Activated B cell treated with CpG ODN at 0.5 μM for 24 hours (primary cell): ENCODE measurements at regions of chr12 and their contacts with region 1.

Region 1: GRCh38 chr12:124863416-124864325 is at the start of gene SCARB1:
- DNase-seq: peak; percentile 80
- ATAC-seq: peak; percentile 85
- H3K4me3 Mint-ChIP-seq: peak within 1 kb of the TSS; percentile 83
- H3K27ac Mint-ChIP-seq: peak within 1 kb of the TSS; percentile 91
- H3K4me1 Mint-ChIP-seq: peaks cover 40% of the 10 kb centered on the region
- H3K27me3 Mint-ChIP-seq: no peaks in the 10 kb centered on the region
- CTCF ChIP-seq: no peak
- total RNA-seq, gene SCARB1: 39.3 and 40.8 TPM in 2 replicates

Region 2: GRCh38 chr12:124745891-124746570 is 117.6 kb before region 1 on chr12:
- CTCF ChIA-PET with region 1: no interaction called
- POLR2A ChIA-PET with region 1: no interaction called
- intact Hi-C with region 1: no loop called
- DNase-seq: no peak
- ATAC-seq: peak; percentile 43
- H3K4me3 Mint-ChIP-seq: no peak overlapping the region
- H3K27ac Mint-ChIP-seq: no peak overlapping the region
- H3K4me1 Mint-ChIP-seq: peaks cover 20% of the 10 kb centered on the region
- H3K27me3 Mint-ChIP-seq: peaks cover 24% of the 10 kb centered on the region
- CTCF ChIP-seq: no peak

Region 3: DNA sequence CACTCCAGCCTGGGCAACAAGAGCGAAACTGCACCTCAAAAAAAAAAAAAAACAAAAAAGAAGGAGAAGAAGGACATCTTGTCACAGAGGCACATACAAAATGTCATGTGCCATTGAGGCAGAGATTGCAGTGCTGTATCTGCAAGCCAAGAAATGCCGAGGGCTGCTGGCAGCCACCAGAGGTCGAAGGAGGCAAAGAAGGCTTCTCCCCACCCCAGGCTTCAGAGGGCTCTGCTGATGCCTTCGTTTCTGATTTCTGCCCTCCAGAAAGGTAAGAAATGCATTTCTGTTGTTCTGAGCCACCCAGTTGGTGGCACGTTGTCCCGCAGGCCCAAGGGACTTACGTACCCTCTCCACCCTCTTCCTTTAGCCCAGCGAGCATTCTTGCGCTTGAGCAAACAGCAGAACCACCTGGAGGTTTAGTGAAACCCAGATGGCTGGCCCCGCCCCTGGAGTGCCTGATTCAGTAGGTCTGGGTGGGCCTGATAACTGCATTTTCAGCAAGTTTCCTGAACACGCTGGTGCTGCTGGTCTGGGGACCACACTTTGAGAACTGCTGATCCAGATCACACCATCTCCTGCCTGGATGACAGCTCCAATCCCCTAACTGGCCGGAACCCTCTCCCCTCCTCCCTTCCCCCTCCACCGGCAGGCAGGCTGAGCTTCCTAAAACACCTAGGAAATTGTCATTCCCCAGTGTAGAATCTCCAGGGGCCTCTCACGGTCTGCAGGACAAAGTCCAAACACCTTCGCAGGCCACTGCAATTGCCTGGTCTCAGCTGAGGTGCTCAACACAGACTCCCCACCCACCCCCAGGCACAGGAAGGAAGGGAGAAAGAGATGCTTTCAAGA is 21.1 kb after region 1 on chr12:
- CTCF ChIA-PET with region 1: interaction called, 3 read pairs
- POLR2A ChIA-PET with region 1: interaction called, 11 read pairs
- intact Hi-C with region 1: loop called (anchors 2 kb)
- DNase-seq: peak; percentile 60
- ATAC-seq: peak; percentile 95
- H3K4me3 Mint-ChIP-seq: peak overlapping the region; percentile 70
- H3K27ac Mint-ChIP-seq: peak overlapping the region; percentile 87
- H3K4me1 Mint-ChIP-seq: peaks cover 65% of the 10 kb centered on the region
- H3K27me3 Mint-ChIP-seq: no peaks in the 10 kb centered on the region
- CTCF ChIP-seq: no peak

Region 4: GRCh38 chr12:124898200-124898922 is 34.7 kb after region 1 on chr12:
- CTCF ChIA-PET with region 1: no interaction called
- POLR2A ChIA-PET with region 1: interaction called, 20 read pairs
- intact Hi-C with region 1: loop called (anchors 1 kb)
- DNase-seq: peak; percentile 55
- ATAC-seq: peak; percentile 81
- H3K4me3 Mint-ChIP-seq: peak overlapping the region; percentile 29
- H3K27ac Mint-ChIP-seq: no peak overlapping the region
- H3K4me1 Mint-ChIP-seq: peaks cover 45% of the 10 kb centered on the region
- H3K27me3 Mint-ChIP-seq: no peaks in the 10 kb centered on the region
- CTCF ChIP-seq: peak; percentile 33

Region 5: GRCh38 chr12:124917135-124917840 is 53.6 kb after region 1 on chr12:
- CTCF ChIA-PET with region 1: no interaction called
- POLR2A ChIA-PET with region 1: interaction called, 15 read pairs
- intact Hi-C with region 1: no loop called
- DNase-seq: peak; percentile 77
- ATAC-seq: peak; percentile 63
- H3K4me3 Mint-ChIP-seq: peak overlapping the region; percentile 100
- H3K27ac Mint-ChIP-seq: peak overlapping the region; percentile 100
- H3K4me1 Mint-ChIP-seq: peaks cover 91% of the 10 kb centered on the region
- H3K27me3 Mint-ChIP-seq: no peaks in the 10 kb centered on the region
- CTCF ChIP-seq: no peak

Region 6: DNA sequence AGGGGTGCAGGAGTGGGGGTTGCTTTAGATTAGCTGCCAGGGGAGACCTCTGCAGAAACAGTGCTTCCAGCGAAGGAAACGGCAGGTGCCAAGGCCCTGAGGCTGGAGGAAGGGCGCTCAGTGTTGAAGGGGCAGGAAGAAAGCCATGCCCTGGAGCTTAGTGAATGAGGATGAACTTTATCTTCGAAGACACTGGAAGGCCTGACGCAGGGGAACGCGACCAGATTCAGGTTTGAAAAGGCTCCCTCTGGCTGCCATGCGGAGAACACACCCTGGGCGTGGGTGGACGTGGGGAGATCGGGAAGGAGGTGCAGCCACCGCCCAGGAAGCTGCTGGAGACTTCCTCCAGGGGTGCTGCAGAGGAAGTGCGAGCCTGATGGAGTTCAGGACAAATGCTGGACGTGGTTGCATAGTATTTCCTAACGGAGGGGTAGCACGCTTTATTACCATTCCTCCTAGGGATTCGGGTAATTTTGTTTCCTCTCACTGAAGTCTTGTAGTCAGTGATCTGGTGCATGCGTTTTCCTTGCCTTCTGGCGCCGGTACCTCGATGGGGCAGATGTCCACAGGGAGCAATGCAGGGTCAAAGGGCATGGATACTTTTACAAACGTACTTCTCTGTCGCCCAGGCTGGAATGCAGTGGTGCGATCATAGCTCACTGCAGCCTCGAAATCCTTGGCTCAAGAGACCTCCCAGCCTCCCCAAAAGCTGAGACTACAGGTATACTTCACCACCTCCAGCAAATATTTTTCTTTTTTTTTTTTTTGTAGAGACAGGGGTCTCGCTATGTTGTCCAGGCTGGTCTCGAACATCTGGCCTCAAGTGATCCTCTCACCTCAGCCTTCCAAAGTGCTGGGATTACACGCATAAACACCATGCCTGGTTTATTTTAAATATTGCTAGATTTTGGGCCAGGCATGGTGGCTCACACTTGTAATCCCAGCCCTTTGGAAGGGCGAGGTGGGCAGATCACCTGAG is 77.2 kb after region 1 on chr12:
- CTCF ChIA-PET with region 1: no interaction called
- POLR2A ChIA-PET with region 1: interaction called, 5 read pairs
- intact Hi-C with region 1: loop called (anchors 2 kb)
- DNase-seq: peak; percentile 62
- ATAC-seq: peak; percentile 60
- H3K4me3 Mint-ChIP-seq: no peak overlapping the region
- H3K27ac Mint-ChIP-seq: no peak overlapping the region
- H3K4me1 Mint-ChIP-seq: peaks cover 15% of the 10 kb centered on the region
- H3K27me3 Mint-ChIP-seq: no peaks in the 10 kb centered on the region
- CTCF ChIP-seq: no peak